ENCODE measurements at regions of chr10 and their contacts with region 1.

Region 1: DNA sequence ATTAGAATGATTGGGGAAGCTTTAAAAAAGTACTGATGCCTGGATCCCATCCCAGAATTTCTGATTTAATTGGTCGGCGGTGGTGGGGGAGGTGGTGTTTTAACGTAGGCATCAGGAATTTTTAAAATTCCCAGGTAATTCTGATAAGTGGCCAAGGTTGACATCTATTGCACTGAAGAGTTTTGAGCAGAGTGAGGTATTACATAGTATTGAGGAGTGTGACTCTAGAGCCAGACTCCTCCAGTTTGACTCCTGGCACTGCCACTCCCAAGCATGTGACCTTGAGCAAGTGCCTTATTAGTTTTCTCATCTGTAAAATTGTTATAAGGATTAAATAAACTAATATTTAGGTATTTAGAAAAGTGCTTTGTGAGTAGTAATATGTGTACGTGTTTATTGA is 6.2 kb downstream of the PLEKHA1 start:
- DNase-seq: no peak
- H3K4me3 ChIP-seq: no peak overlapping the region
- H3K27ac ChIP-seq: no peak overlapping the region
- H3K4me1 ChIP-seq: peaks cover 5% of the 10 kb centered on the region
- H3K27me3 ChIP-seq: no peaks in the 10 kb centered on the region
- CTCF ChIP-seq: no peak

Region 2: GRCh38 chr10:122419876-122420623 is 39.3 kb after region 1 on chr10:
- CTCF ChIA-PET with region 1: no interaction called
- POLR2A ChIA-PET with region 1: no interaction called
- intact Hi-C with region 1: loop called (anchors 2 kb)
- DNase-seq: no peak
- H3K4me3 ChIP-seq: no peak overlapping the region
- H3K27ac ChIP-seq: no peak overlapping the region
- H3K4me1 ChIP-seq: no peaks in the 10 kb centered on the region
- H3K27me3 ChIP-seq: no peaks in the 10 kb centered on the region
- CTCF ChIP-seq: no peak